OCI-LY7 (cell line): ENCODE measurements at regions of chr12 and their contacts with region 1.

Region 1: GRCh38 chr12:123232807-123233543 is at the starts of genes MPHOSPH9 and MTRFR:
- DNase-seq: peak; percentile 100
- H3K4me3 ChIP-seq: peak within 1 kb of the TSS; percentile 94
- H3K27ac ChIP-seq: peak within 1 kb of the TSS; percentile 70
- H3K4me1 ChIP-seq: peaks cover 56% of the 10 kb centered on the region
- CTCF ChIP-seq: no peak
- total RNA-seq, gene MPHOSPH9: 136 and 166 TPM in 2 replicates
- total RNA-seq, gene MTRFR: 30.1 and 35.5 TPM in 2 replicates

Region 2: GRCh38 chr12:122888232-122888867 is 344.6 kb before region 1 on chr12:
- CTCF ChIA-PET with region 1: no interaction called
- POLR2A ChIA-PET with region 1: interaction called, 3 read pairs
- intact Hi-C with region 1: loop called (anchors 10 kb)
- DNase-seq: peak; percentile 67
- H3K4me3 ChIP-seq: peak overlapping the region; percentile 52
- H3K27ac ChIP-seq: peak overlapping the region; percentile 79
- H3K4me1 ChIP-seq: peaks cover 56% of the 10 kb centered on the region
- CTCF ChIP-seq: no peak

Region 3: DNA sequence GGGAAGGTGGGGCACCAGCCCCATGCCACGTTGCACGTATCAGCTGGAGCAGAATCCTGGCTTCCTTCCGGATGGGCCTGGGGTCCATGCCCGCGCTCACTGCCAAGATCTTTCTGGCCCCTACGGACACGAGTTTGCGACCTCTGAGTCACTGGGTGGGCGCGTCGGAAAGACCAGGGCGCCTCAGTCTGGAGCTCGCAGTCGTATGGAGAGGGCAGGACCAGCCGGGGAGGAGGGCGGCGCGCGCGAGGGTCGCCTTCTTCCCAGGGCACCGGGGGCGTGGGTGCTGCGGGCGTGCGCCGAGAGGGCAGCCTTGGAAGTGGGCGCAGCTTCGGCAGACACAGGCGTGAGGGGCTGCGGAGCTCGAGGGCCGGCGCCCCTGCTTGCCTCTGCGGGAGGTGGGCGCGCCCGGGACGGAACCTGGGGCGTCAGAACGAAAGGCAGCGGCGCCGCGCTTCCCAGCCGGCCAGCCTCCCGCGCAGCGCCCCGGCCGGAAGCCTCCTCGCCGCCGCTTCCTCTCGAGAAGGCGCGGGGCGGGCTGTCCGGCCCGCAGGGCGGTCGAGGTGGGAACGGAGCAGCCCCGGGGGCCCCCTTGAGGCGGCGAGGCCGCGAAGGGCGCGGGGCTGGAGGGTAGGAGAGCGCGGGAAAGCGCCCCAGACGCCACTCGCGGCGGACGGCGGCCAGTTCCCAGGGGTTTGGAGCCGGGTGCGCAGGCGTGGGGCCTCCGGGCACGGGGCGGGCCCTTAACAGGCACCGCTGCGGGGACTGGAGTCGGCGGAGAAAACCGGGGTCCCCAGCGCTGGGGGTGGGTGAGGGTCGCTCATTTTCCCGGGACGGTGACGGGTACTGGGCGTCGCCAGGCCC is 252.6 kb before region 1 on chr12 and contains the start of gene ARL6IP4:
- CTCF ChIA-PET with region 1: no interaction called
- POLR2A ChIA-PET with region 1: interaction called, 17 read pairs
- intact Hi-C with region 1: loop called (anchors 1 kb)
- DNase-seq: peak; percentile 85
- H3K4me3 ChIP-seq: peak within 1 kb of the TSS; percentile 95
- H3K27ac ChIP-seq: peak within 1 kb of the TSS; percentile 72
- H3K4me1 ChIP-seq: peaks cover 56% of the 10 kb centered on the region
- CTCF ChIP-seq: no peak; the same call in 1 of the 2 replicates
- total RNA-seq, gene ARL6IP4: 263 and 329 TPM in 2 replicates

Region 4: GRCh38 chr12:123024819-123025391 is 208.1 kb before region 1 on chr12:
- CTCF ChIA-PET with region 1: no interaction called
- POLR2A ChIA-PET with region 1: no interaction called
- intact Hi-C with region 1: no loop called
- DNase-seq: no peak
- H3K4me3 ChIP-seq: no peak overlapping the region
- H3K27ac ChIP-seq: no peak overlapping the region
- H3K4me1 ChIP-seq: no peaks in the 10 kb centered on the region
- CTCF ChIP-seq: no peak

Region 5: GRCh38 chr12:123056053-123056741 is 176.8 kb before region 1 on chr12:
- CTCF ChIA-PET with region 1: no interaction called
- POLR2A ChIA-PET with region 1: interaction called, 11 read pairs
- intact Hi-C with region 1: no loop called
- DNase-seq: no peak
- H3K4me3 ChIP-seq: no peak overlapping the region
- H3K27ac ChIP-seq: no peak overlapping the region
- H3K4me1 ChIP-seq: peaks cover 40% of the 10 kb centered on the region
- CTCF ChIP-seq: no peak

Region 6: DNA sequence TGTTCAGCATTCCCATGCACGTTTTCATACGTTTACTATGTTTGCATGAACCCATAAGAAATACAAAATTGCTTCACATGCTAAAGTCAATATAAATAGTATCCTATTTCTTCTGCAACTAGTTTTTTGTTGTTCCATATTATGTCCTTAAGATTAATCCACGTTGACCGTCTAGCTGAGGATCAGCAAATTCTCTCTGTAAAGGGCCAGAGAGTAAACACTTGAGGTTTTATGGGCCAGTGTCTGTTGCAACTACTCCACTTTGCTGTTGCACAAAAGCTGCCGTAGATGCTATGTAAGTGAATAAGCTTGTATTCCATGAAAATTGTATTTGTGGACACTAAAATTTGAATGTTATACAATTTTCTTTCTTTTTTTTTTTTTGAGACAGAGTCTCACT is 61.0 kb before region 1 on chr12:
- CTCF ChIA-PET with region 1: no interaction called
- POLR2A ChIA-PET with region 1: no interaction called
- intact Hi-C with region 1: no loop called
- DNase-seq: no peak
- H3K4me3 ChIP-seq: no peak overlapping the region
- H3K27ac ChIP-seq: no peak overlapping the region
- H3K4me1 ChIP-seq: no peaks in the 10 kb centered on the region
- CTCF ChIP-seq: no peak

Region 7: GRCh38 chr12:123365025-123365917 is 132.3 kb after region 1 on chr12:
- CTCF ChIA-PET with region 1: no interaction called
- POLR2A ChIA-PET with region 1: interaction called, 11 read pairs
- intact Hi-C with region 1: no loop called
- DNase-seq: peak; percentile 100
- H3K4me3 ChIP-seq: peak overlapping the region; percentile 83
- H3K27ac ChIP-seq: peak overlapping the region; percentile 97
- H3K4me1 ChIP-seq: peaks cover 20% of the 10 kb centered on the region
- CTCF ChIP-seq: peak; percentile 96